ENCODE measurements at regions of chr2 and their contacts with region 1.

Region 1: GRCh38 chr2:55419679-55420438 is at the start of gene CCDC88A:
- DNase-seq: peak; percentile 98
- H3K4me3 ChIP-seq: peak within 1 kb of the TSS; percentile 74 to 97 (median 79)
- H3K27ac ChIP-seq: peak within 1 kb of the TSS; percentile 88 to 96 (median 92)
- H3K4me1 ChIP-seq: peaks cover 0 to 28% (median 21%) of the 10 kb centered on the region in 4 donors
- H3K27me3 ChIP-seq: no peaks in the 10 kb centered on the region
- CTCF ChIP-seq: peak in 3 of 4 experiments; percentile 19 to 50 (median 34)
- EP300 ChIP-seq: peak in 2 of 4 donors; percentile 27 to 30
- POLR2A ChIP-seq: peak; percentile 52 to 82
- total RNA-seq, gene CCDC88A: 33.8 to 72.8 (median 44.8) TPM

Region 2: GRCh38 chr2:55232084-55232862 is 187.6 kb before region 1 on chr2 and contains the starts of genes CLHC1 and RPS27A:
- intact Hi-C with region 1: loop called (anchors 5 kb)
- DNase-seq: peak; percentile 94
- H3K4me3 ChIP-seq: peak within 1 kb of the TSS; percentile 74 to 92 (median 88)
- H3K27ac ChIP-seq: peak within 1 kb of the TSS; percentile 92 to 95 (median 92)
- H3K4me1 ChIP-seq: peaks cover 0 to 34% (median 18%) of the 10 kb centered on the region in 4 donors
- H3K27me3 ChIP-seq: no peaks in the 10 kb centered on the region
- CTCF ChIP-seq: no peak
- EP300 ChIP-seq: no peak
- POLR2A ChIP-seq: peak; percentile 80 to 86
- total RNA-seq, gene CLHC1: 4.9 to 22.4 (median 11.4) TPM
- total RNA-seq, gene RPS27A: 1,474 to 3,968 (median 2,475) TPM

Region 3: DNA sequence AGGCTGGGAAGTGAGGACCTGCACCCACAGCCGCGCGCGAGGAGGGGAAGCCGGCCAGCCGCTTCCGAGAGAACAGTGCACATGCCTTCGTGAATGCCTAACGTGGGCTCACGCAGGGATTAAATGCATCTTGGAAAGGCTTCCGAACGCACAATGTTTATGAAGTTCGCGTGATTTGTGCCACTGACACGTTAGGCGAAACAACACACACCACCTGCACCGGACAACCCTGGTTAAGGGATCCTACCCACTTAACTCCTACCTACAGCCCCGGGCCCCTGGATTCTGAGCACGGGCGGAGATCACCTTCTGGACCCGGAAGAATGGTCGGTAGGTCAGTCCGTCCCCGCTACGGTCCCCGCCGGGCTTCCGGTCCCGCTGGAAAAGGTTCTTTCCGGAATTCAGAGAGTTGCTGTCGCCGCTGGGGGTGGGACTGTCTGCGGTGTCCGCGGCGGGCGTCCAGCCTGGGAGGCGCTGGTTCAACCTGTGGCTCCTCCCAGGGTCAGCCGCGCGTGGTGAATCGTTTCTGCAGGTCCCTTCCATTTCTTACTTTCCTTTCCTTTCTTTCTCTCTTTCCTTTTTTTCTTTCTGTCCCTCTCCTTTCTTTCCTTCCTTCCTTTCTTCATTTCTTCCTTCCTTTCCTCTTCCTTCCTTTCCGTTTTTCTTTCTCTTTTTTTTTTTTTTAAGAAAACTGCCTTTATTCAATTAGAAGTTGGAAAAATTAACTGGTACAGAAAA is 150.8 kb before region 1 on chr2 and contains the start of gene MTIF2:
- intact Hi-C with region 1: loop called (anchors 5 kb)
- DNase-seq: peak; percentile 97
- H3K4me3 ChIP-seq: peak within 1 kb of the TSS; percentile 55 to 73 (median 67)
- H3K27ac ChIP-seq: peak within 1 kb of the TSS; percentile 86 to 90 (median 87)
- H3K4me1 ChIP-seq: peaks cover 0 to 18% (median 14%) of the 10 kb centered on the region in 4 donors
- H3K27me3 ChIP-seq: no peaks in the 10 kb centered on the region
- CTCF ChIP-seq: no peak
- EP300 ChIP-seq: peak in 1 of 4 donors; percentile 14
- POLR2A ChIP-seq: peak; percentile 16 to 31
- total RNA-seq, gene MTIF2: 15.0 to 27.7 (median 22.4) TPM

Region 4: GRCh38 chr2:55282110-55282917 is 137.5 kb before region 1 on chr2:
- intact Hi-C with region 1: loop called (anchors 2 kb)
- DNase-seq: peak; percentile 92
- H3K4me3 ChIP-seq: peak overlapping the region; percentile 63 to 85 (median 69)
- H3K27ac ChIP-seq: peak overlapping the region; percentile 85 to 96 (median 91)
- H3K4me1 ChIP-seq: peaks cover 0 to 15% (median 10%) of the 10 kb centered on the region in 4 donors
- H3K27me3 ChIP-seq: no peaks in the 10 kb centered on the region
- CTCF ChIP-seq: no peak
- EP300 ChIP-seq: no peak
- POLR2A ChIP-seq: peak; percentile 45 to 59

Region 5: GRCh38 chr2:55364189-55365055 is 55.4 kb before region 1 on chr2:
- intact Hi-C with region 1: loop called (anchors 2 kb)
- DNase-seq: peak; percentile 79
- H3K4me3 ChIP-seq: no peak overlapping the region
- H3K27ac ChIP-seq: peak overlapping the region; percentile 36 to 59 (median 57)
- H3K4me1 ChIP-seq: peaks cover 0 to 23% (median 9%) of the 10 kb centered on the region in 4 donors
- H3K27me3 ChIP-seq: no peaks in the 10 kb centered on the region
- CTCF ChIP-seq: no peak
- EP300 ChIP-seq: no peak
- POLR2A ChIP-seq: no peak

Region 6: GRCh38 chr2:55384786-55385185 is 35.1 kb before region 1 on chr2:
- intact Hi-C with region 1: no loop called
- DNase-seq: no peak
- H3K4me3 ChIP-seq: no peak overlapping the region
- H3K27ac ChIP-seq: no peak overlapping the region
- H3K4me1 ChIP-seq: no peaks in the 10 kb centered on the region
- H3K27me3 ChIP-seq: no peaks in the 10 kb centered on the region
- CTCF ChIP-seq: no peak
- EP300 ChIP-seq: no peak
- POLR2A ChIP-seq: no peak

Region 7: GRCh38 chr2:55519938-55520885 is 100.4 kb after region 1 on chr2:
- intact Hi-C with region 1: loop called (anchors 2 kb)
- DNase-seq: no peak
- H3K4me3 ChIP-seq: peak overlapping the region; percentile 55 to 79 (median 79)
- H3K27ac ChIP-seq: peak overlapping the region; percentile 85 to 88 (median 87)
- H3K4me1 ChIP-seq: peaks cover 0 to 11% (median 7%) of the 10 kb centered on the region in 4 donors
- H3K27me3 ChIP-seq: no peaks in the 10 kb centered on the region
- CTCF ChIP-seq: no peak
- EP300 ChIP-seq: no peak
- POLR2A ChIP-seq: no peak

Region 8: GRCh38 chr2:55617175-55618024 is 197.5 kb after region 1 on chr2 and contains the start of gene PPP4R3B:
- intact Hi-C with region 1: loop called (anchors 5 kb)
- DNase-seq: peak; percentile 100
- H3K4me3 ChIP-seq: peak within 1 kb of the TSS; percentile 93 to 99 (median 97)
- H3K27ac ChIP-seq: peak within 1 kb of the TSS; percentile 95 to 99 (median 98)
- H3K4me1 ChIP-seq: peaks cover 0 to 48% (median 39%) of the 10 kb centered on the region in 4 donors
- H3K27me3 ChIP-seq: no peaks in the 10 kb centered on the region
- CTCF ChIP-seq: peak; percentile 42 to 74 (median 72)
- EP300 ChIP-seq: peak in 1 of 4 donors; percentile 59
- POLR2A ChIP-seq: peak; percentile 93 to 94
- total RNA-seq, gene PPP4R3B: 75.8 to 88.5 (median 78.8) TPM